Activated CD8-positive, alpha-beta T cell treated with anti-CD3 and anti-CD28 coated beads, Interleukin-2, amount 10 ng/mL, durations not matched to agents 7 days and 5 days (primary cell): ENCODE measurements at regions of chr13 and their contacts with region 1.

Region 1: GRCh38 chr13:21603531-21604448 is at the start of gene MICU2:
- DNase-seq: peak; percentile 95
- ATAC-seq: peak; percentile 98
- H3K4me3 Mint-ChIP-seq: peak within 1 kb of the TSS; percentile 86
- H3K27ac Mint-ChIP-seq: peak within 1 kb of the TSS; percentile 86
- H3K4me1 Mint-ChIP-seq: peaks cover 30% of the 10 kb centered on the region
- H3K27me3 Mint-ChIP-seq: peaks cover 9% of the 10 kb centered on the region
- total RNA-seq, gene MICU2: 33.1 to 35.3 TPM

Region 2: GRCh38 chr13:21579754-21580316 is 24.0 kb before region 1 on chr13:
- CTCF ChIA-PET with region 1: interaction called, 4 read pairs
- POLR2A ChIA-PET with region 1: interaction called, 11 read pairs
- DNase-seq: no peak
- ATAC-seq: peak; percentile 71
- H3K4me3 Mint-ChIP-seq: peak overlapping the region; percentile 12
- H3K27ac Mint-ChIP-seq: peak overlapping the region; percentile 77
- H3K4me1 Mint-ChIP-seq: peaks cover 24% of the 10 kb centered on the region
- H3K27me3 Mint-ChIP-seq: no peaks in the 10 kb centered on the region

Region 3: DNA sequence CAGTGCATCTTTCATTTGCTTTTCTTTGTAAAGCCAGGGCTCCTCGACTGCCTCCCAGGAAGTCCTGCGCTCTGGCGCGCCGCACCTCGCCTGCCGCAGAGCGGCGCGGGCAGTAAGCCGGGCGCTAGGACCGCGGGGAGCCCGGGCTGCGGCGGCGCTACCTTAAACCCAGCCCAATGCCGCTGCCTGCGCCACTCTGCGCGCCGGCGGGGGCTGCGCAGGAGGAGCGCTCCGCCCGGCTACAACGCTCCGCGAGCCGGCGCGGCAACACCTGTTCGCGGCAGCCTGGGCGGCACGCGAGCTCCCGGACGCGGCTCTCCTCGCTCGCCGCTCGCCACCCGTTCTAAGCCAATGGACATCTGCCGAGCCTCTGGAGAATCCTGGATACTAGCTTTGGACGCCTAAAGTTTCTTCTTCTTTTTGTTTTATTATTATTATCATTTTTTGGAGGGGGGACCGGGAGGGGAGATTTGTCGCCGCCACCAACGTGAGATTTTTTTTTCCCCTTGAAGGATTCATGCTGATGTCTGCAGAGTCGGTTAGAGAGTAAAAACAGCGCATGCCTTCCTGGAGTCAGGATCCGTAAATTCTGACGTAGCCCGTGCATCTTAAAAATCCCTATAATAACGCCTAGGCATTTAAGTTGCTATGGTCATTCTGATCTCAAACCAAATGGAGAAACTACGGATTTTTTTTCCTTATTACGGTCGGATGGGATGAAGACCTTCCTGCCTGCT is 67.3 kb after region 1 on chr13 and contains the start of gene FGF9:
- CTCF ChIA-PET with region 1: interaction called, 5 read pairs
- POLR2A ChIA-PET with region 1: interaction called, 27 read pairs
- DNase-seq: peak; percentile 81
- ATAC-seq: peak; percentile 82
- H3K4me3 Mint-ChIP-seq: peak within 1 kb of the TSS; percentile 80
- H3K27ac Mint-ChIP-seq: peak within 1 kb of the TSS; percentile 75
- H3K4me1 Mint-ChIP-seq: peaks cover 44% of the 10 kb centered on the region
- H3K27me3 Mint-ChIP-seq: peaks cover 53% of the 10 kb centered on the region
- total RNA-seq, gene FGF9: 0.21 TPM in 1 of 2 experiments, not detected in the other

Region 4: GRCh38 chr13:21800837-21801616 is 197.2 kb after region 1 on chr13:
- CTCF ChIA-PET with region 1: no interaction called
- POLR2A ChIA-PET with region 1: no interaction called
- DNase-seq: no peak
- ATAC-seq: no peak
- H3K4me3 Mint-ChIP-seq: no peak overlapping the region
- H3K27ac Mint-ChIP-seq: no peak overlapping the region
- H3K4me1 Mint-ChIP-seq: no peaks in the 10 kb centered on the region
- H3K27me3 Mint-ChIP-seq: no peaks in the 10 kb centered on the region